Endothelial cell of umbilical vein (primary cell): ENCODE measurements at regions of chr7 and their contacts with region 1.

Region 1: GRCh38 chr7:37109843-37110242 is 338.8 kb downstream of the ELMO1 start:
- DNase-seq: peak; percentile 9
- H3K4me3 ChIP-seq: no peak overlapping the region
- H3K27ac ChIP-seq: no peak overlapping the region
- H3K4me1 ChIP-seq: no peaks in the 10 kb centered on the region
- H3K27me3 ChIP-seq: no peaks in the 10 kb centered on the region
- CTCF ChIP-seq: no peak
- POLR2A ChIP-seq: no peak

Region 2: GRCh38 chr7:36357054-36357453 is 752.8 kb before region 1 on chr7:
- CTCF ChIA-PET with region 1: no interaction called
- POLR2A ChIA-PET with region 1: no interaction called
- dilution Hi-C with region 1: no loop called
- intact Hi-C with region 1: loop called (anchors 5 kb)
- DNase-seq: no peak
- H3K4me3 ChIP-seq: no peak overlapping the region
- H3K27ac ChIP-seq: no peak overlapping the region
- H3K4me1 ChIP-seq: no peaks in the 10 kb centered on the region
- H3K27me3 ChIP-seq: no peaks in the 10 kb centered on the region
- CTCF ChIP-seq: no peak
- POLR2A ChIP-seq: no peak

Region 3: DNA sequence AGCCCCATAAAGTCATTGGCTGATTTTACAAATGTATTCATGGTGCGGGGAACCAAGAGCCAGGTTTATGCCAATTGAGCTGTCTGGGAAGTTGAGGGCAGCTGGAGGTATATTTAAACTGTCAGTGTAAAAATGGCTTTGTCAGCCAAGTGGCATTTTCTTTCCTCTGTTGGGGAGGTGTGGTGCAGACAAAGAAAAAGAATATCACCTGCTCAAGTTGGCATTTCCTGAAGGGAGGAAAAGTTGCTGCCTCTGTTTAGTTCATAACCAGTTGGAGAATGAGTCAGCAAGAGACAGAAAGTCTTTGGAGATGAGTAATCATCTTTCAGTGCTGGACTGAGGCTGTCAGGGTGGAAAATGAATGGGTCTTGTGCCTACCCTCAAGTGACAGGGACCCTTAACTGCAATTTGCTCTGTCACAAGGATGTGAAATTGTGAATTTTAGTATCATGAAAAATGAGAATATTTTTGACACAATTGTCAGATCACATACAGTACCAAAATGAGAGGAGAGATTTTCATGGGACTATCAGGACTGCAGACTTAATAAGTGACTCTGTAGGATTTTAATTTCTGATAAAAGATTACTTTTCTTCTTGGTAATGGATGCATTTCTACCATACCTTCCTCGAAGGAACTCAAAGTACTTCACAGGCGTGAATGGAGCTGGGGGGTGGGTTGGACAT is 582.8 kb before region 1 on chr7:
- CTCF ChIA-PET with region 1: no interaction called
- POLR2A ChIA-PET with region 1: no interaction called
- dilution Hi-C with region 1: no loop called
- intact Hi-C with region 1: no loop called
- DNase-seq: peak; percentile 29
- H3K4me3 ChIP-seq: no peak overlapping the region
- H3K27ac ChIP-seq: no peak overlapping the region
- H3K4me1 ChIP-seq: peaks cover 11% of the 10 kb centered on the region
- H3K27me3 ChIP-seq: peaks cover 0 to 3% of the 10 kb centered on the region in 2 experiments
- CTCF ChIP-seq: no peak
- POLR2A ChIP-seq: no peak